ENCODE measurements at regions of chr9 and their contacts with region 1.

Region 1: DNA sequence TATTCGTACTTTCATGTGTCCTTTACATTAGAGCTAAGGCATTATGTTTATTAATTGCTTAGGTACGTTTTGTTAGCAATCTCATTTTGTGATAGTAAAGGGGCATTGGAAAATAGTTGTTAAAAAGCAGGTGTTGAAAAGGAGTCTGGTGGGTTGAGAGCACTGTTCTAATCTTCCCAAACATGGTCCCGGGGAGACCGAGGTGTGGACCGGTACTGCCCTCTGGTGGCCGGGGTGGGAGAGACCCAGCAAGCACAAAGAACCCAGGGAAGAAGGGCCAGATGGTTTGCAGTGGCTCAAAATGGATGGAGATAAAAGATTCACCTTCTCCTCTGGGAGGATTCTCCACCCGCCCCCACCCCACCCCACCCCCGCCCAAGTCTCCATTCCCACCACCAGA is 26.1 kb downstream of the IDNK start:
- DNase-seq: peak; percentile 65
- H3K4me3 ChIP-seq: no peak overlapping the region
- H3K27ac ChIP-seq: no peak overlapping the region
- H3K4me1 ChIP-seq: peaks cover 48% of the 10 kb centered on the region
- H3K27me3 ChIP-seq: no peaks in the 10 kb centered on the region
- CTCF ChIP-seq: peak; percentile 73

Region 2: DNA sequence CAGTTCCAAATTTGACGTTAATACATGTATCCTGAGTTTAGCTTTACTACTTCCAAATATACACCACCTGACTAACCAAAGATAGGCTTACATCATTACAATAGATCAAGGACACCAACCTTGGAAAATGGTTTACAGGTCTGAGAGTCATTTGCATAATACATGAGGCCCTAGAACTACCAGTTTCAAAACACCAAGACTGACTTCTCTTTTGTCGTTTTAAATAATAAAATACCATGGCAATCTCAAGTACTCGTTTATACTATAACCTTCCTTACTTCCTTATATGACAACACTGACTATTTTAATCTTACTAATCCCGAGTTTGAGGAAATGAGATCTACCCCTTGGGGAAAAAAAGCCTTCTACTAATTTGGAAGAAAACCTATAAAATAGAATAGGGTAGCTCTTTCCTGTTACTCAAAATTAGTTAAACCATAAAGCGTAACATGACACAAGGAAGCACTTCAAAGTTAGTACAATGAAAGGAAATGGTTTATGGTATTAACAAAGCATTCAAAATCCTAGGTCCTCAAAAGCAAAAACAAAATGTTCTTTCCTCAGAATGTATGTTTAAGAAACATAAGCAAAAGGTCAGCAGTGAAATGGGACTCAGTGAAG is 16.6 kb after region 1 on chr9:
- CTCF ChIA-PET with region 1: interaction called, 3 read pairs
- POLR2A ChIA-PET with region 1: interaction called, 11 read pairs
- intact Hi-C with region 1: no loop called
- DNase-seq: peak; percentile 91
- H3K4me3 ChIP-seq: no peak overlapping the region
- H3K27ac ChIP-seq: peak overlapping the region; percentile 72
- H3K4me1 ChIP-seq: peaks cover 27% of the 10 kb centered on the region
- H3K27me3 ChIP-seq: no peaks in the 10 kb centered on the region
- CTCF ChIP-seq: no peak

Region 3: DNA sequence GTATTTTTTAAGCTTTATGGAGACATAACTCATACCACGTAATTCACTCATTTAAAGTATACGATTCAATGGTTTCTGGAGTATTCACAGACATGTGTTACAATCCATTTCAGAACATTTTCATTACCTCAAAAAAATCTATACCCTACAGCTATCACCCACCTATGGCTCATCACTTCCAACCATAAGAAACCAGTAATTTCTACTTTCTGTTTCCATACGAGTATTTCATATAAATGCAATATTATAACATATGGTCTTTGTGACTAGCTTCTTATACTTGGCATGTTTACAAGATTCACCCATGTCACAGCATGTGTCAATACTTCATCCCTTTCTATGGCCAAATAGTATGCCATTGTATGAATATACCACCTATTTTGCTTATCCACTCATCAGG is 39.8 kb after region 1 on chr9:
- CTCF ChIA-PET with region 1: no interaction called
- POLR2A ChIA-PET with region 1: no interaction called
- intact Hi-C with region 1: no loop called
- DNase-seq: no peak
- H3K4me3 ChIP-seq: no peak overlapping the region
- H3K27ac ChIP-seq: no peak overlapping the region
- H3K4me1 ChIP-seq: peaks cover 19% of the 10 kb centered on the region
- H3K27me3 ChIP-seq: no peaks in the 10 kb centered on the region
- CTCF ChIP-seq: no peak